Activated CD4-positive, alpha-beta memory T cell treated with anti-CD3 and anti-CD28 coated beads for 36 hours (primary cell): ENCODE measurements at regions of chr1 and their contacts with region 1.

Region 1: GRCh38 chr1:20151906-20152598 is 12.9 kb downstream of the PLA2G2F start:
- DNase-seq: peak; percentile 84
- H3K4me3 Mint-ChIP-seq: peak overlapping the region; percentile 53
- H3K27ac Mint-ChIP-seq: no peak overlapping the region
- H3K4me1 Mint-ChIP-seq: peaks cover 14% of the 10 kb centered on the region
- H3K27me3 Mint-ChIP-seq: peaks cover 3% of the 10 kb centered on the region

Region 2: DNA sequence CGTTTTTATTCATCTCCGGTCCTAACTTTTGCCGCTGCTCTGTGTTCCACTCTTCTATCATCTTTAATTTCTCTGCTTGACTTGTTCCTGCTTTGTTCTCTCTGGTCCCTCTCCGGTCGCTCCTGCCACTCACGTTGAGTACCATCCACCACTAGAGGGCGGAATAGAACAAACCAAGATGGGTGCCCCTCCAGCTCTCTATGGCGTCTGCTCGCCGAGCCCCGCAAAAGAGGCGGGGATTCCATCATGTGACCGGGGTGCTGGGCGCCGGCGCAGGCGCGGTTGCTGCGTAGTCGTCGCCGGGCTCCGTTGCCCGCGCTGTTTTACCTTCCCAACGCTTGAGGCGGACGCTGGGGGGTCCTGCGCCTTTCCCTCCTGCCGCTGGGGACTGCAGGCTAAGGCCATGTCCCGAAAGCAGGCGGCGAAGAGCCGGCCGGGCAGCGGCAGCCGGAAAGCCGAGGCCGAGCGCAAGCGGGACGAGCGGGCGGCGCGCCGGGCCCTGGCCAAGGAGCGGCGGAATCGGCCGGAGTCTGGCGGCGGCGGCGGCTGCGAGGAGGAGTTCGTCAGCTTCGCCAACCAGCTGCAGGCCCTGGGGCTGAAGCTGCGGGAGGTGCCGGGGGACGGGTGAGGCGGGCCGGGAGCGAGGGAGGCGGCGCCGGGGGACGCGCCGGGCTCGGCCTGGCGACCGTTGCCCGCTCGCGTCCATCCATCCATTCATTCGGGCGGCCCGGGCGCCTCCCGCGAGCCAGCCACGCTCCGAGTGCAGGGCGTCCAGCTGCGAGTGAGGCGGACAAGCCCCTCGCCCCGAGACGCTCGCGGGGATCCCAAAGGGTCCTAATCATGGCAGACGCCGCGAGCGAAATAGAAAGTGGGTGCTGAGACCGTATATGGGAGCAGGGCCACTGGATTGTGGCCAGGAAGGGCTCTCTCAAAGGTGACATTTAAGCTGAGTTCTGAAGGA is 269.7 kb before region 1 on chr1 and contains the start of gene OTUD3:
- CTCF ChIA-PET with region 1: interaction called, 12 read pairs
- POLR2A ChIA-PET with region 1: no interaction called
- intact Hi-C with region 1: no loop called
- DNase-seq: peak; percentile 97
- H3K4me3 Mint-ChIP-seq: peak within 1 kb of the TSS; percentile 84
- H3K27ac Mint-ChIP-seq: peak within 1 kb of the TSS; percentile 14
- H3K4me1 Mint-ChIP-seq: peaks cover 37% of the 10 kb centered on the region
- H3K27me3 Mint-ChIP-seq: peaks cover 7% of the 10 kb centered on the region
- total RNA-seq, gene OTUD3: 6.9 to 8.4 TPM

Region 3: DNA sequence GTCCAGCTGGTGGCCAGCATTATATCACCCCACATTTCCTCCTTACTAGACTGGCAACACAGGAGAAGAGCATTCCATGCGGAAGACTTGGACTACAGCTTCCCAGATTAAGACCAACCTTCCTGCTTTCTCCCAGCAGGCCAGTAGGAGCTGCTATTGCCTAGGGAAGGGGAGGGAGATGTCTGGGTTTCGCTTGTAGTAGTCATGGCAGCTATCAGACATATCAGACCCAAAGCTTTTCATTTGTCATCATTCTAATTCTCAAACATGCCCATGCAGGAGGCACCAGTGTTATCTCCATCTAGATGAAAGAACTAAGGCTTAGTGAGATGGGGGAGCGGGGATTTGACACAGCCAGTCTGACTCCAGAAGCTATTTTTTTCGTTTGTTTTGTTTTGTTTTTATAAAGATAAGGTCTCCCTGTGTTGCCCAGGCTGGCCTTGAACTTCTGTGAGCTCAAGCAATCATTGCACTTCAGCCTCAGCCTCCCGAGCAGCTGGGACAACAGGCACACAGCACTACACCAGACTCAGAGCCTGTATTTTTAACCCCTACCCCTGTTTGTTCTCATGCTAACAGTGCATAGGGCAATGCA is 177.1 kb before region 1 on chr1:
- CTCF ChIA-PET with region 1: interaction called, 23 read pairs
- POLR2A ChIA-PET with region 1: no interaction called
- intact Hi-C with region 1: loop called (anchors 2 kb)
- DNase-seq: peak; percentile 46
- H3K4me3 Mint-ChIP-seq: no peak overlapping the region
- H3K27ac Mint-ChIP-seq: no peak overlapping the region
- H3K4me1 Mint-ChIP-seq: no peaks in the 10 kb centered on the region
- H3K27me3 Mint-ChIP-seq: peaks cover 13% of the 10 kb centered on the region

Region 4: DNA sequence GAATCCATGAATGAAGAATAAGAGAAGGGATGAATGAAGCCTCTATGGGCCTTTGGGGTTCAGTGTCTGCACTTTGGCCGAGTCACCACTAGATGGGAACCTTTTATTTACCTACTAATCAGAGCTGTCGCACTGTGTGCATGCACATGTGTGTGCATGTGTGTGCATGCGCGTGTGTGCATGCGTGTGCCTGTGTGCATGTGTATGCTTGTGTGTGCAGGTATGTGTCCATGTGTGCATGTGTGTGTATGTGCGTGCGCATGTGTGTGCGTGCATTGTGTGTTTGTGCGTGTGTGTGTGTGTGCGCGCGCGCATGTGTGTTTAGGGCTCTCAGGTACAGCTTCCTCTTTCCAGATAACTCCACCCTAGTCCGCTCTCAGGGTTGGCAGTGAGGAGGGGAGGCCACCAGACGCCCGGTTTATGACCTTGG is 13.5 kb after region 1 on chr1:
- CTCF ChIA-PET with region 1: interaction called, 10 read pairs
- POLR2A ChIA-PET with region 1: no interaction called
- intact Hi-C with region 1: no loop called
- DNase-seq: peak; percentile 29
- H3K4me3 Mint-ChIP-seq: no peak overlapping the region
- H3K27ac Mint-ChIP-seq: no peak overlapping the region
- H3K4me1 Mint-ChIP-seq: no peaks in the 10 kb centered on the region
- H3K27me3 Mint-ChIP-seq: peaks cover 2% of the 10 kb centered on the region

Region 5: GRCh38 chr1:20185834-20186782 is 34.1 kb after region 1 on chr1 and contains the starts of genes PLA2G2C and UBXN10:
- CTCF ChIA-PET with region 1: interaction called, 13 read pairs
- POLR2A ChIA-PET with region 1: no interaction called
- intact Hi-C with region 1: no loop called
- DNase-seq: peak; percentile 88
- H3K4me3 Mint-ChIP-seq: peak within 1 kb of the TSS; percentile 77
- H3K27ac Mint-ChIP-seq: peak within 1 kb of the TSS; percentile 74
- H3K4me1 Mint-ChIP-seq: peaks cover 41% of the 10 kb centered on the region
- H3K27me3 Mint-ChIP-seq: peaks cover 21% of the 10 kb centered on the region
- total RNA-seq, gene PLA2G2C: 0.43 to 0.44 TPM
- total RNA-seq, gene UBXN10: 0.53 to 0.55 TPM